Activated T-helper 2 cell treated with anti-CD3 and anti-CD28 coated beads, Interferon-gamma antibody, Interleukin-2, Interleukin-4, amounts not matched to agents 10 μg/mL and 5 μg/mL and 100 μg/mL, durations not matched to agents 14 hours and 24 hours and 36 hours (primary cell): ENCODE measurements at regions of chr3 and their contacts with region 1.

Region 1: GRCh38 chr3:63993653-63994079 is 29.6 kb downstream of the PSMD6 start:
- DNase-seq: peak; percentile 20
- H3K4me3 Mint-ChIP-seq: no peak overlapping the region
- H3K27ac Mint-ChIP-seq: no peak overlapping the region
- H3K4me1 Mint-ChIP-seq: peaks cover 8% of the 10 kb centered on the region
- H3K27me3 Mint-ChIP-seq: no peaks in the 10 kb centered on the region

Region 2: DNA sequence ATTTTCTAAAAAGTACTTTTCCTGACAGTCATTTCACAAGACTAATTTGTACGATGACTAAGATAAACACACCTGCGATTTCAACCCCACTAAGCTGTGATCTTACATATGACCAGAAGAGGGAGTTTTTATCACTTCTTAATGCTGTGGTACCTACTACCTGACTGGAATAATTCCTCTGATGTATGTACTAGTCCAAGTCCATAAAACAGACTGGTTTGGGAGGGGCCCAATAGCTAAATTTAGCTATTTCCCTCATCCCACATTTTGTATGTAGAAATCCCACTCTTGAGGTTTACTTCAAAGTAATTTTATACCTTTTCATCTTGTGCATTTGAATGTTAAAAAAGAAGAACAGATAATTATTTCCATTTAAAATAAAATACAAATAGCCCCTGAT is 31.8 kb before region 1 on chr3:
- intact Hi-C with region 1: loop called (anchors 1 kb)
- DNase-seq: no peak
- H3K4me3 Mint-ChIP-seq: no peak overlapping the region
- H3K27ac Mint-ChIP-seq: no peak overlapping the region
- H3K4me1 Mint-ChIP-seq: peaks cover 44% of the 10 kb centered on the region
- H3K27me3 Mint-ChIP-seq: no peaks in the 10 kb centered on the region